BJ (cell line): ENCODE measurements at regions of chr19 and their contacts with region 1.

Region 1: DNA sequence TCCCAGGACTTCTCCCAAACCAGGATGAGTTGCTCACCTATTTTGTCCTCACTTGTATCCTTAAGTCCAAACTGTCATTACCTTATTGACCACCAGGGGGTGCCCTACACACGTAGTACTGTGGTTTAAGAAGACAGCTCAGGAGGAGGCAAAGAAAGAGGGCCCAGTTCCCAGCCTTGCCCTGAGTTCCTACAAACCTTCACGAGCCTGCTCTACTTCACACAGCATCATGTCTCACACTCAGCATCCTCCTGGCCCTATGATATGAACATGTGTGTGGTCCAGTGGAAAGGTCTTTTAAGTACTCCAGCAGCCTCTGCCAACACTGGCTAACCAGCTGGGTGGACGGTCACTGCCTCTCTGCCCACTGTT is 8.1 kb upstream of the ZNF784 start:
- DNase-seq: no peak
- H3K4me3 ChIP-seq: no peak overlapping the region
- H3K27me3 ChIP-seq: no peaks in the 10 kb centered on the region
- CTCF ChIP-seq: peak; percentile 83

Region 2: DNA sequence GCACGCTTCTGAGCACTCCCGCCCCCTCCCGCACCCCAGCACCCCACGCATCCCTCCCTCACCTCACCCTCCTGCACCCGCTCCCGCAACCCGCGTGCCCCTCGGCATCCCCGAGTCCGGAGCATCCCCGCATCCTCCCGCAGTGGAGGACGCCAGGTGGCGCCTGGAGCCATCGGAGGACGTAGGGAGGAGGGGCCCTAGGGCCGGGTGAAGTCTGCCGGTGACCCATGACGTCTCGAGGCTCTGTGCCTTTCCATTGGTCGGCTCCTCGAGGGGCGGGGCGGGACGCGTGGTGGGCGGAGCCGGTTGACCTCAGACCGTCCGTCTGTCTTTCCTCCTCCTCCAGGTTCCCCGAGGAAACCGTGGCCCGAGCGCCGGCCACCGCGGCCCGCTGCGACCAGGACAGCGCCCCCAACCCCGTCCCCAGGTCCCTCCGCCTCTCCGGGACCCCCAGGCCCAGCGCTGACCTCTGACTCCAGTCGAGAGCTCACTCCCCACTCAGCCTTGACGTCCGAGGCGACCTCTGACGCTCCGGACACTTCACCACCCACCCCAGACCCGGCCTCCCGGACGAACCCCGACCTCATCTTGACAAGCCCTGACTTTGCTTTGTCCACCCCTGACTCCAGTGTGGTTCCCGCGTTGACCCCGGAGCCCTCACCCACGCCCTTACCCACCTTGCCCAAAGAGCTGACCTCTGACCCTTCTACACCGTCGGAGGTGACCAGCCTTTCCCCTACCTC is 115.4 kb before region 1 on chr19:
- CTCF ChIA-PET with region 1: interaction called, 58 read pairs
- POLR2A ChIA-PET with region 1: no interaction called
- DNase-seq: no peak
- H3K4me3 ChIP-seq: peak overlapping the region; percentile 34
- H3K27me3 ChIP-seq: no peaks in the 10 kb centered on the region
- CTCF ChIP-seq: peak; percentile 98

Region 3: GRCh38 chr19:55599468-55600279 is 32.8 kb before region 1 on chr19 and contains the start of gene FIZ1:
- CTCF ChIA-PET with region 1: interaction called, 11 read pairs
- POLR2A ChIA-PET with region 1: no interaction called
- DNase-seq: peak; percentile 92
- H3K4me3 ChIP-seq: peak within 1 kb of the TSS; percentile 88
- H3K27me3 ChIP-seq: no peaks in the 10 kb centered on the region
- CTCF ChIP-seq: no peak
- polyA plus RNA-seq, gene FIZ1: 3.7 and 4.0 TPM in 2 replicates

Region 4: DNA sequence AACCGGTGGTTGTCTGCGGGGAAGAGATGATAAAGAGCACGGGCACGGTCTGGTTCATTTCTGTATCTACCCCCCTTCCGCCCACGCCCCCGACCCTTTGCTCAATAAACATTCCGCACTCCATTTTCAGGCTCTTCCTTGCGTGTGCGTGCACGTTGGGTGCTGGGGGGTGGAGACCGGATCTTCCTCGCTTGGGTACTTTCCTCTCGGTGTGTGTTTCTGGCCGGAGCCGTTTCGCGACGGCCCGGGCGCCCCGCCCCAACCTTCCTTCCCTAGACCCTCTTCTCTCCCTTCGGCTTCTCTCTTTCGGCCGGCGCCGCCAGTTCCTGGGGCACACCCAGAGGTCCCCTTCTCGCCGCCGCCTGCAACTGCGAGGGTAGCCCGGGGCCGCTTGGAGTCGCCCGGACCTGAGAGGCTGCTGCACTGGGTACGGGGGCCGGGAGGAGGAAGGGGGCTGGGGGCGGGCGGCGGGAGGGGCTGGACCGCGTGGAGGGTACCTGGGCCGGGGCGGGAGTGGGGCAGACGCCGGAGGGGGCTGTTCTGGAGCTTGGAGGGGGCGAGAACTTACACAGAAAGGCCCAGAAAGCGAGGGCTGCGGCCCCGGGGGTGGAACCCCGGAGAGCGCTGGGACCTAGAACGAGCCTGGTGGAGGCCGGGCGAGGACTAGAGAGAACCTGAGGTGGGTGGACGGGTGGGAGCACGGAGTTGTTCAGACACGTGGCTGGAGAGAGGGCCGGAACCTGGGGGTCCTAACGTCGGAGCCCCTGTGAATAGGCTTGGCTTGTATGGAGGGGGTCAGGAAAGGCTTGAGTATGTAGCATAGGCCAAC is 11.1 kb after region 1 on chr19 and contains the start of gene ZNF581:
- CTCF ChIA-PET with region 1: interaction called, 14 read pairs
- POLR2A ChIA-PET with region 1: interaction called, 4 read pairs
- DNase-seq: no peak
- H3K4me3 ChIP-seq: peak within 1 kb of the TSS; percentile 75
- H3K27me3 ChIP-seq: no peaks in the 10 kb centered on the region
- CTCF ChIP-seq: no peak
- polyA plus RNA-seq, gene ZNF581: 22.1 and 31.3 TPM in 2 replicates

Region 5: DNA sequence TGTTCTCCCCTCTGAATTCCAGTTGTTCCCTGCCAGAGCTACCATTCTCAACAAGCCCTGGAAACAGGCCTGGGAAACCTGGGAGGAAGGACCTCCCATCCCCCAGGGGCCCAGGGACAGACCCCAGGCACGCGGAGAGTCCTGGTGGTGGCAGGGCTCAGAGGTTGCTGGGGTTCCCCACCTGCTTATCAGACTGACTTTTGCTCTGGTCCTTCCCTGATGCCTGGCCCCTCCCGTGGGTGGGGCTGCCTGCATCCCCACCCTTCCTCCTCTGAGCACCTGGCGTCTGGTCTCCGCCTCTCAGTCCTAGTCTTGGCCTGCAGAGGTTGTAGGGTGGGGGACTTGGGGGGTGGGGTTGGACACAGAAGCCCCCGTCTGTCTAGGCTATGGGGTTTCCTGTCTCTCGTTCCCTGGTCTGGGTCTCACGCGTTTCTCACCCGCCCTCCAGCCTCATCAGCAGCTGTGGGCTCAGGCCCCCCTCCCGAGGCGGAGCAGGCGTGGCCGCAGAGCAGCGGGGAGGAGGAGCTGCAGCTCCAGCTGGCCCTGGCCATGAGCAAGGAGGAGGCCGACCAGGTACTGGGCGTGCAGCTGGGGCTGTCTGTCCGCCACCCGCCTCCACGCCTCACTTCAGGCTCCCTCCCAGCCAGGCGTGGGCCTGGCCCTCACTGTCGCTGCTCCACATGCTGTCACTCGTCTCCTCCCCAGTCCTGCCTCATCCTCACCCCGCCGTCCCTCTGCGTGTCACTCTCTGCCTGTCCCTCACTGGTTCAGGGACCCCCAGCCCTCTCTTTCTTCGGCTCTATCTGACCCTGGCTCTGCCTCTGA is 56.2 kb after region 1 on chr19:
- CTCF ChIA-PET with region 1: no interaction called
- POLR2A ChIA-PET with region 1: no interaction called
- DNase-seq: no peak
- H3K4me3 ChIP-seq: no peak overlapping the region
- H3K27me3 ChIP-seq: no peaks in the 10 kb centered on the region
- CTCF ChIP-seq: no peak